ENCODE measurements at regions of chr13 and their contacts with region 1.

Region 1: DNA sequence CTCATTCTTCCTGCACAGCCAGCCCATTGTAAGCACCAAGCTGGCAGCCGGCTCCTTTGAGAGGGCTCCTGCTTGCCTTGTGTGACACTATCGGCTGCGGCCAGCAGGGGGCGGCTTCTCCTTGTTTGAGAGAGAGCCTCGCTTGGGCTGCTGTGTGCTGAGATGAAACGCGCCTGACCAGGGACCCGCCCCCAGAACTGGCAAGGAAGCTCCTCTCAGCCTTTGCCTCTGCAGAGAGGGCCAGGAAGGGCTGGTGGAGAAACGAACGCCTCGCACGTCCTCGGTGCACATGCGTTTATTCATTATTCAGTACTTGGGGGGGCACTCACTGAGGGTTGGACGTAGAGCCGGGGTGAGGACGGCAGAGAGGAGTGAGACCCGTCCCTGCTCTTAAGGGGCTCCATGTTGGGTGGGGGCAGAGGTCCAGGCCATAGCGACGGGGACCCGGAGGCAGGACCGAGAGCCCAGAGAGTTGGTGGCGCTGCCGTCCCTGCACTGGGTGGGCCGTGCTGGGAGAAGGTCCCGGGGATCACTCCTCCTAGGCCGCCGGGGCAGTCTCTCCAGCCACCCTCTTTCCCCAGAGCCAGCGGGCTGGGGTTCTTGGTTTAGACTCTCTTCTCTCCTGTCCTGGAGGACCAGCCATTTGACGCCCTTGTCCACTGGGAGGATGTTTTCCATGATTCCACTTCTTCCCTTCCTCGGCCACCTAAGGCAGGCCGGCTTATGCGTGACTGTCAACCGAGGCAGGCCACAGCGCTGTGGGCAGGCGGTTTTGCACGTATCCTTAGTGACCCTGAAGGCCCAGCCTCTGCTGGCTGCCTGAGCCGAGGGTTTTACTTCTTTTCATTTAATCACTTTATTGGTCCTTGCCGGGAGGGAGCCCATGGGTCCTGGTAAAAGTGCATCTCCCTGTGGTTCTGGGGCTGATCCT is 174.5 kb downstream of the KATNAL1 start:
- DNase-seq: peak; percentile 99
- ATAC-seq: peak; percentile 99
- H3K4me3 Mint-ChIP-seq: no peak overlapping the region
- H3K27ac Mint-ChIP-seq: peak overlapping the region; percentile 79
- H3K4me1 Mint-ChIP-seq: peaks cover 12% of the 10 kb centered on the region
- H3K27me3 Mint-ChIP-seq: no peaks in the 10 kb centered on the region

Region 2: DNA sequence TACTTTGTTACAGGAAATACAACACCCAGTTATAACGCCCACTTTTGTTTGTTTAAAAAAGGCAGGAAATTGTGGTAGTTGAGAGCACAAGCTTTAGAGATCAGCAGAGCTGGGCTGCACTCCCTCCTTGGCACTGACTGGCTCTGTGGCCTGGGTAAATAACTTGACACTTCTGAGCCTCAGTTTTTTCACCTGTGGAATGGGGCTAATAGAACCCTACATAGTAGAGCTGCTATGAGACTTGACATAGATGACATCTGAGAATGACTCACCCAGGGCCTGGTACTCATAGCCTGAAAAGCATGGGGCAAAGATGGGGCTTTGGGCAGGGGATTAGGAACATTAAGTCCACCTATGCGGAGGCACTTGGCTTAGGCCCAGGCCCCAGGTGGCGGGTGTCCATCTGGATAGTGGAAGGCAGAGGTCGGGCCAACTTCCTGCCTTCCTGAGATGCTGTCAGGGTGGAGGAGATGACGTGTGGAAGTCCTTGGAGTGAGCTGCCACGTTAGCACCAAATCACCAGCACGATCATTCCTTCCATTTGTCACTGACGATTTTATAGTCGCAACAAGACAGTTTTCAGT is 15.4 kb after region 1 on chr13:
- CTCF ChIA-PET with region 1: interaction called, 48 read pairs
- POLR2A ChIA-PET with region 1: no interaction called
- intact Hi-C with region 1: no loop called
- DNase-seq: peak; percentile 51
- ATAC-seq: peak; percentile 42
- H3K4me3 Mint-ChIP-seq: no peak overlapping the region
- H3K27ac Mint-ChIP-seq: peak overlapping the region; percentile 87
- H3K4me1 Mint-ChIP-seq: peaks cover 93% of the 10 kb centered on the region
- H3K27me3 Mint-ChIP-seq: no peaks in the 10 kb centered on the region

Region 3: GRCh38 chr13:30165796-30166195 is 32.9 kb after region 1 on chr13:
- CTCF ChIA-PET with region 1: interaction called, 11 read pairs
- POLR2A ChIA-PET with region 1: no interaction called
- intact Hi-C with region 1: no loop called
- DNase-seq: no peak
- ATAC-seq: no peak
- H3K4me3 Mint-ChIP-seq: no peak overlapping the region
- H3K27ac Mint-ChIP-seq: no peak overlapping the region
- H3K4me1 Mint-ChIP-seq: peaks cover 17% of the 10 kb centered on the region
- H3K27me3 Mint-ChIP-seq: no peaks in the 10 kb centered on the region

Region 4: GRCh38 chr13:30224732-30225131 is 91.8 kb after region 1 on chr13:
- CTCF ChIA-PET with region 1: interaction called, 13 read pairs
- POLR2A ChIA-PET with region 1: no interaction called
- intact Hi-C with region 1: no loop called
- DNase-seq: peak; percentile 22
- ATAC-seq: peak; percentile 96
- H3K4me3 Mint-ChIP-seq: no peak overlapping the region
- H3K27ac Mint-ChIP-seq: peak overlapping the region; percentile 10
- H3K4me1 Mint-ChIP-seq: peaks cover 10% of the 10 kb centered on the region
- H3K27me3 Mint-ChIP-seq: no peaks in the 10 kb centered on the region

Region 5: GRCh38 chr13:30454991-30455390 is 322.1 kb after region 1 on chr13:
- CTCF ChIA-PET with region 1: interaction called, 12 read pairs
- POLR2A ChIA-PET with region 1: interaction called, 4 read pairs
- intact Hi-C with region 1: loop called in 1 of 2 experiments (anchors 2 kb)
- DNase-seq: no peak
- ATAC-seq: no peak
- H3K4me3 Mint-ChIP-seq: no peak overlapping the region
- H3K27ac Mint-ChIP-seq: no peak overlapping the region
- H3K4me1 Mint-ChIP-seq: peaks cover 13% of the 10 kb centered on the region
- H3K27me3 Mint-ChIP-seq: no peaks in the 10 kb centered on the region

Region 6: DNA sequence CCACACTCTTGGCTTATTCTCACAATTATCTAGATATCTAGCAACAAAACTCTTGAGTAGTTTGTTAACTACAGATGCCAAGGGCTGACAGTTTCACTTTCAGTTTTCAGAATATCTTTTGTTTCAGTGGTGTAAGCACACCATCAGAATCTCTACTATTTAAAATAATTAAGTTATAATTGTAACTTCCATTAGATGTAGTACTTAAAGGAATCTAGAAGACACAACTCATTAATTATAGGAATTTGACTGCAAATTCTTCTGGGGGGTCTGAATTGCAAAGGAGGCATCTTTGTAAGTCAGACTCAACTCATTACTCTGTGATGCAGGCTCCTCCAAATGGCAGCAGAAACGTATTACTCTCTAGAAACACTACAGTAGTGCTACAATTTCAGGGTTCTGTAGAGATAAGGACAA is 440.0 kb after region 1 on chr13:
- CTCF ChIA-PET with region 1: interaction called, 6 read pairs
- POLR2A ChIA-PET with region 1: no interaction called
- intact Hi-C with region 1: loop called in 1 of 2 experiments (anchors 1 kb)
- DNase-seq: peak; percentile 27
- ATAC-seq: peak; percentile 54
- H3K4me3 Mint-ChIP-seq: peak overlapping the region; percentile 55
- H3K27ac Mint-ChIP-seq: peak overlapping the region; percentile 72
- H3K4me1 Mint-ChIP-seq: peaks cover 40% of the 10 kb centered on the region
- H3K27me3 Mint-ChIP-seq: no peaks in the 10 kb centered on the region

Region 7: DNA sequence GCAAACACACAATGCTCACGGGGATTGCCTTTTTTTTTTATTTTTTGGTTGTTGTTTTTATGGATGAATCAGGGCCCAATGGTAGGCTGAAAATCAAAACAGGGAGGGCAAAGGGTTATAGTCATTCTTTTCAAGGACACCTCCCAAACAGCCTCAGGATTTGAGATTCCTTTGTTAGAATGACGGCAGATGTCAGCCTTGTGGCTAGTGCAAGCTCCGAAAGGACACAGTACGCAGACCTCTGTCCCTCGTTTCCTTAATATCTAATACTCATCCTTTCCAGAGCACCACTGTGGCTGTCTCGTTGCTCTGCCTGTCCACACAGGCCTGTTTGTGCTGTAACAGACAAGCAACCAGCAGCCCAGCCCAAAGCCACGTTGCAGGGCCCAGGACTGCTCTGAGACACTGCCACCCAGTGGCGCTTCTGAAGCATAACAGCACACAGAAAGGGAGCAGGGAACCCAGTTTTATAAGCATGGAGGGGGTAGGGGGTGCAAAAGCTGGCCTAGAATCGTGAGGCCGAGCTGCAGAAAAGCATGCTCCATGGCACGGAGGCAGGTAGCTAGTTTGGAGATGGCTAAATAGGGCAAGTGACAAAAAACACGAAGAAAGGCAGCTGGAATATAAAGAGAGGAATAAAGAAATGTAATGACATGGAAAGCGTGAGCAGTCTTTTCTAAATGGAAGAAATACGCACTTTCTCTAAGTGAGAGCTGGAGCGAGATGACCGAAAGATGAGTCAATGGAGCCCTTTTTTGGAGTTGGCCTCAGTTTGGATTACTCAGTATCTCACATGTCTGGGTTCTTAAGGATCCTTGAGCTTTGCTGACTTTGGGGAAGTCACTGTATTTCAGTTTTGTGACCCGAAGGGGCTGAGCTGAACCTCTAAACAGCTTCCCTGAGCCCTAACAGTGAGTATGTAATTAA is 732.5 kb after region 1 on chr13:
- CTCF ChIA-PET with region 1: no interaction called
- POLR2A ChIA-PET with region 1: no interaction called
- intact Hi-C with region 1: loop called in 1 of 2 experiments (anchors 1 kb)
- DNase-seq: peak; percentile 82
- ATAC-seq: peak; percentile 95
- H3K4me3 Mint-ChIP-seq: no peak overlapping the region
- H3K27ac Mint-ChIP-seq: no peak overlapping the region
- H3K4me1 Mint-ChIP-seq: peaks cover 8% of the 10 kb centered on the region
- H3K27me3 Mint-ChIP-seq: peaks cover 5% of the 10 kb centered on the region

Measured in activated CD4-positive, alpha-beta T cell treated with anti-CD3 and anti-CD28 coated beads for 36 hours (primary cell).